Right cardiac atrium (tissue), 5 donors: ENCODE measurements at regions of chr15 and their contacts with region 1.

Region 1: DNA sequence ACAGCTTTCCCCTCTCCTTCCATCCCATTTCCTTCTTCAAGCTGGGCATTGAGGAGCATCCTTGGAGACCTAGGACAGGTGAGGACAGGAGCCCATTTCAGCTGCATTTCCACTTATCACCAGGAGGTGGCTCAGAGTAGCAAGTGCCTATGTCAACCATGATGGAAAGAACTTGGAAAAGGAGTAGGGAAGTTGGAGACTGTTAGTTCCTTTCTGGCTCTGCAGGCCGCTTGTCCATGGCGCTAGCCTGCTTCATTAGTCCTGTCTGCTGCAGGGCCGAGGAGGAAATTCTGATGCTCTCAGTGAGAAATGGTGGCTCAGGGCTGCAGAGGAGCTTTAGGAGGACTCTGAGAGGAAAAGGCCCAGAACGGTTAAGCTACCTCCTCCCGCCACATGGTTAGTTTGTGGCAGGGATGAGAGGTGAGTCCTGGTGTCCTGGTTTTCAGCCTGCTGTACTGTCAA is 7.0 kb upstream of the CD276 start:
- DNase-seq: peak; percentile 36 to 75 (median 63)
- ATAC-seq: peak; percentile 76 to 86
- H3K4me3 ChIP-seq: no peak overlapping the region
- H3K27ac ChIP-seq: no peak overlapping the region
- H3K4me1 ChIP-seq: no peaks in the 10 kb centered on the region
- H3K27me3 ChIP-seq: no peaks in the 10 kb centered on the region

Region 2: GRCh38 chr15:73442968-73443367 is 234.2 kb before region 1 on chr15 and contains the start of gene REC114:
- intact Hi-C with region 1: no loop called
- DNase-seq: peak in 1 of 3 donors; percentile 36
- ATAC-seq: no peak
- H3K4me3 ChIP-seq: no peak within 1 kb of the TSS
- H3K27ac ChIP-seq: no peak within 1 kb of the TSS
- H3K4me1 ChIP-seq: no peaks in the 10 kb centered on the region
- H3K27me3 ChIP-seq: no peaks in the 10 kb centered on the region
- total RNA-seq, gene REC114: 3.4 to 12.1 (median 6.1) TPM

Region 3: DNA sequence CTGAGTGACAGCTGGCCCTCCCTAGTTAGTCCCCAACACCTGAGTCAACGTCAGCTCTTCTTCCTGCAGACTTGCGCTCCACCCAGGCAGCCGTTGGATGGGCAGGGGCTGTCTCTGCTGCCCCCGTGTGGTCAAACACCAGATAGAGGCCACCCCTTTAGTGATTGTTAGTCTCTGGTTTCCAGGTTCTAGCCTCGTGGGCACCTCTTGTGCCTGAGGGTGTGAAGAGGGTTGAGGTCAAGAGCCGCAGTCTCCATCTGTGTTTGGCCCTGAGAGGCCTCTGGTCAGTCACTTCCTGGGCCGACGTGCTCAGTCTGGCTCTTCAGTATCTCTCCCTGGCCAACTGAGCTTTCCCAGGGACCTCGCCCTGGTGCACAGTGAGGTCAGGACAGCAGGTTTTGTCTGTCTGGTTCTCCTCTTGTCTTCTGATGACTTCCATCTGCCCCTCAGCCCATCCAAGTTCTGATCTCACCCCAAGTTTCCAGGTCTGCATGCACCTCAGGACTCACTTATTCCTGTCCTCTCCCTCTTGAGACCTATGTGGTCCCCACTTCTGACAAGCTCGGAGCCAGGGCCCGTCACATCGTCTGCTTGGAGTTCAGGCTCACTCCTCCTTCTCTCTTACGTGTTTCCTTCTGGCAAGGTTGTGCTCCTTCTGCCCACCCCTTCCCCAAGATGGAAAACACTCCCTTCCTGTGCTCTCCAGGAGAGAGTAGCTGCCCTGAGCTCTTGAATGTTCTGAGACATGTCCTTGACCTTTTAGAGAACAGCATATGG is 27.9 kb after region 1 on chr15:
- intact Hi-C with region 1: loop called in 1 of 4 experiments (anchors 5 kb)
- DNase-seq: peak; percentile 63 to 87 (median 79)
- ATAC-seq: peak; percentile 52 to 57
- H3K4me3 ChIP-seq: no peak overlapping the region
- H3K27ac ChIP-seq: no peak overlapping the region
- H3K4me1 ChIP-seq: no peaks in the 10 kb centered on the region
- H3K27me3 ChIP-seq: no peaks in the 10 kb centered on the region

Region 4: GRCh38 chr15:73838831-73839426 is 161.8 kb after region 1 on chr15:
- intact Hi-C with region 1: no loop called
- DNase-seq: peak; percentile 80 to 92 (median 90)
- ATAC-seq: peak; percentile 89 to 93
- H3K4me3 ChIP-seq: no peak overlapping the region
- H3K27ac ChIP-seq: no peak overlapping the region
- H3K4me1 ChIP-seq: peaks cover 3% of the 10 kb centered on the region
- H3K27me3 ChIP-seq: no peaks in the 10 kb centered on the region